Activated CD4-positive, alpha-beta memory T cell treated with anti-CD3 and anti-CD28 coated beads, Interleukin-2, amount 10 ng/mL, durations not matched to agents 7 days and 5 days (primary cell): ENCODE measurements at regions of chr19 and their contacts with region 1.

Region 1: DNA sequence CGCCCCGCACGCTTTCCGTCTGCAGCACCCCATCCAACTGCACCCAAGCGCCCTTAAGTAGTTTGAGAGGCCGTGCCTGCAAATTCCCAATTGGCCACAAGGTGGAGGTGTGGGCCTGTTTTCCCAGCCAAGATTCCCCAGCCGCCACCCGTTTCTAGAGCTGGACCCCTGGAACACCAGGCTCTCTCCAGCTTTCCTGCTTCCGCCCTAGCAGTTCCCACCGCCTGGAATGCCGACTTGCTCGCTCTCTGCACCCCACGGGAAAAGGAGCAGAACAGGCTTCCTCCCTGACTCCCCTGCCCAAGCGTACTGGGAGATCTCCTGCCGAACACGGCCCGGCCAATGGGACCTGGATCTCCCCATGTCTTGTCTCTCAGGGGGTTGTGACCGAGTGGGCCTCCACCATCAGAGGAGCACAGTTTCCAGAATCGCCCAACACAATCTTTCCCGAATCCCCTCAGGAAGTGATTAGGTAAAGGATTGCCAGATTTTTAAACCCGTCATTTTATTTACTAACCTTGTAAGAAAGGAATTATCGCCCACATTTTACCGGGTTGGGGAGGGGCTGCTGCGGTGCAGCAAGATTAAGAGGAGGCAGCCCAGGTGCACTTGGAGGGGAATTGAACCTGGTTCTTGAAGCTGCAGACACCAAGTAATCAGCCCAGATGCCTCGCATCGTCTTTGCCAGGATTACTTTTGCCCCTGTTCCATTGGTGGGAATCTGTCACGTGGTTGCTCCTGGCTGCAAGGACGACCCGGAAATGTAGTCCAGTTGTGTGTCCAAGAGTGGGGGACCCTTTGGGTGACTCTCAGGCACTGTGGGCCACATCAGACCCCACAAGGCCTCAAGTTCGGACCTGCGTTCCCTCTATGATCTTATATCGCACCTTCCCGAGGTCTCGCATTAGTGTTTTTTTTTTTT is 3.5 kb upstream of the NAPSA start:
- DNase-seq: peak; percentile 83
- H3K4me3 Mint-ChIP-seq: peak overlapping the region; percentile 94
- H3K27ac Mint-ChIP-seq: peak overlapping the region; percentile 90
- H3K4me1 Mint-ChIP-seq: peaks cover 42% of the 10 kb centered on the region
- H3K27me3 Mint-ChIP-seq: no peaks in the 10 kb centered on the region

Region 2: DNA sequence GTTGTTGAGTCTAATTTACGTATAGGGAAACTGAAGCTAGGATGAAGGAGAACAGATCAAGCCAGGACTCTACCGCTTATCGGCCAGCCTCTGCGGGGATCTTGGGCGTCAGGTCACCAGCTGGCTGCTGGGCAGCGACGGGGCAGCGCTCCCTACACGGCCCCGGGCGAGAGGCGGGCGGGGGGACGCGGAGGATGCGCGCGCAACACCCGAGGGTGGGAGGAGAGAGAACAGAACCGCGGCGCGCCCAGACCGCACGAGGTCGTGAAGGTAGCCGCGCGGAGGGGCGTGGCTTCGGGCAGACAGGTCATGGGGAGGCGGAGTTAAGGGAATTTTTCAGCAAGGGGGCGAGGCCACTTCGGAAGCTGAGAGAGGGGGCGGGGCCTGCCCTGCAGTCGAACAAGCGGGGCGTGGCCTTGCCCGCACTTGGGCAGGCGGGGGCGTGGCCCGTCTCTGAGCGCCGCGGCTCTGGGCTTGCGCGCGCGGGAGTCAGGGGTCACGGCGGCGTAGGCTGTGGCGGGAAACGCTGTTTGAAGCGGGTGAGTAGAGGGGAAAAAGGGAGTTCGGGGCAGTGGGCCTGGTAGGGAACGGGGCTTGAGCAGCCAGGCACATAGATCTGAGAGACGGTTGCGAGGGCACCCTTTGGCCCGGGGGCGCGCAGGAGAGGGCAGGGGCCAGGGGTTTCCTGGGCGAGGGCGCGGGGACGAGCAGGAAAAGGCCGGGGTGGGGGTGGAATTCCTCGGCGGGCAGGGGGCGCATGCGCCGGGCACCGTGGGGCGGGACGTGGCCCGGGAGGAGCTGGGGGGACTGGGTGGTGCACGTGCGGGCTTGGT is 15.2 kb after region 1 on chr19 and contains the start of gene POLD1:
- CTCF ChIA-PET with region 1: interaction called, 4 read pairs
- POLR2A ChIA-PET with region 1: interaction called, 11 read pairs
- DNase-seq: peak; percentile 99
- H3K4me3 Mint-ChIP-seq: peak within 1 kb of the TSS; percentile 98
- H3K27ac Mint-ChIP-seq: peak within 1 kb of the TSS; percentile 89
- H3K4me1 Mint-ChIP-seq: peaks cover 45% of the 10 kb centered on the region
- H3K27me3 Mint-ChIP-seq: no peaks in the 10 kb centered on the region
- total RNA-seq, gene POLD1: 117 to 119 TPM

Region 3: DNA sequence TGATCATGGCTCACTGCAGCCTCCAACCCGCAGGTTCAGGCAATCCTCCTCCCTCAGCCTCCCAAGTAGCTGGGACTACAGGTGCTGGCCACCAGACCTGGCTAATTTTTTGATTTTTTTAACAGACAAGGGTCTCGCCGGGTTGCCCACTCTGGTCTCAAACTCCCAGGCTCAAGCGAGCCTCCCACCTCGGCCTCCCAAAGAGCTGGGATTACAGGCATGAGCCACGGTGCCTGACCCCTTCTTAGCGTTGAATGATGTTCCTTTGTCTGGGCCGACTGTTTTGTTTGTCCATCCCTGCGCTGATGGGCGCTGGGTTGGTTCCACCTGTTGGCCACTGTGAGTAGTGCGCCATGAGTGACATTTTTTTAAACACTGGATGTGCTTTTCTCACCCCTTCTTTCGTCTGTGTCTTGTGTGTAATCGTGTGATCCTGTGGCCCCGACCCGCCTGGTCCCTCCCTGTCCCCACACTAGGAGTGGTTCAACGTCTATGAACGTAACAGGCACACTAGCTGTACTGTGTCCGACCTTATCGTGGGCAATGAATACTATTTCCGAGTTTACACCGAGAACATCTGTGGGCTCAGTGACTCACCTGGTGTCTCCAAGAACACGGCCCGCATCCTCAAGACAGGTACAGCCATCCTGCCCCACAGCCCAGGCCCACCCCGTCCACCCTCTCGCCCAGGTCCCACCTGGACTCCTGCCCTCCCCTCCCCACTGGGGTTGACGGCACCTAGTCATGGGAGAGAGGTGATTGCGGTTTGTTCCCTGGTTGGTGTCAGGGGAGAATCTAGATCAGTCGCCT is 92.4 kb after region 1 on chr19:
- CTCF ChIA-PET with region 1: interaction called, 13 read pairs
- POLR2A ChIA-PET with region 1: interaction called, 7 read pairs
- DNase-seq: peak; percentile 74
- H3K4me3 Mint-ChIP-seq: no peak overlapping the region
- H3K27ac Mint-ChIP-seq: no peak overlapping the region
- H3K4me1 Mint-ChIP-seq: peaks cover 16% of the 10 kb centered on the region
- H3K27me3 Mint-ChIP-seq: peaks cover 16% of the 10 kb centered on the region